RWPE1 (cell line): ENCODE measurements at regions of chr11 and their contacts with region 1.

Region 1: GRCh38 chr11:64880240-64881001 is 2.0 kb upstream of the EHD1 start:
- DNase-seq: no peak
- H3K27ac ChIP-seq: no peak overlapping the region
- CTCF ChIP-seq: no peak

Region 2: GRCh38 chr11:64894070-64894796 is 13.8 kb after region 1 on chr11:
- CTCF ChIA-PET with region 1: interaction called, 10 read pairs
- POLR2A ChIA-PET with region 1: no interaction called
- DNase-seq: peak; percentile 60
- H3K27ac ChIP-seq: peak overlapping the region; percentile 39
- CTCF ChIP-seq: peak; percentile 89